Gastrocnemius medialis (tissue), 4 donors: ENCODE measurements at regions of chr19 and their contacts with region 1.

Region 1: GRCh38 chr19:40603389-40604135 is 2.4 kb downstream of the LTBP4 start:
- DNase-seq: peak; percentile 95 to 97
- ATAC-seq: peak; percentile 84 to 85
- H3K4me3 ChIP-seq: peak overlapping the region; percentile 47 to 80 (median 54)
- H3K27ac ChIP-seq: peak overlapping the region; percentile 73 to 84 (median 78)
- H3K4me1 ChIP-seq: peaks cover 31 to 38% of the 10 kb centered on the region in 2 donors
- H3K27me3 ChIP-seq: peaks cover 19 to 30% (median 21%) of the 10 kb centered on the region in 3 donors
- CTCF ChIP-seq: no peak
- POLR2A ChIP-seq: peak; percentile 57 to 81

Region 2: GRCh38 chr19:40444192-40445028 is 159.2 kb before region 1 on chr19 and contains the start of gene SERTAD3:
- in situ Hi-C with region 1: no loop called
- intact Hi-C with region 1: no loop called
- DNase-seq: peak; percentile 95 to 97
- ATAC-seq: peak; percentile 72 to 73
- H3K4me3 ChIP-seq: peak within 1 kb of the TSS; percentile 77 to 98 (median 92)
- H3K27ac ChIP-seq: peak within 1 kb of the TSS; percentile 96 to 99 (median 99)
- H3K4me1 ChIP-seq: peaks cover 15 to 24% of the 10 kb centered on the region in 2 donors
- H3K27me3 ChIP-seq: no peaks in the 10 kb centered on the region
- CTCF ChIP-seq: peak in 2 of 5 experiments; percentile 16 to 22
- POLR2A ChIP-seq: peak; percentile 99
- total RNA-seq, gene SERTAD3: 12.7 to 24.4 (median 18.1) TPM

Region 3: DNA sequence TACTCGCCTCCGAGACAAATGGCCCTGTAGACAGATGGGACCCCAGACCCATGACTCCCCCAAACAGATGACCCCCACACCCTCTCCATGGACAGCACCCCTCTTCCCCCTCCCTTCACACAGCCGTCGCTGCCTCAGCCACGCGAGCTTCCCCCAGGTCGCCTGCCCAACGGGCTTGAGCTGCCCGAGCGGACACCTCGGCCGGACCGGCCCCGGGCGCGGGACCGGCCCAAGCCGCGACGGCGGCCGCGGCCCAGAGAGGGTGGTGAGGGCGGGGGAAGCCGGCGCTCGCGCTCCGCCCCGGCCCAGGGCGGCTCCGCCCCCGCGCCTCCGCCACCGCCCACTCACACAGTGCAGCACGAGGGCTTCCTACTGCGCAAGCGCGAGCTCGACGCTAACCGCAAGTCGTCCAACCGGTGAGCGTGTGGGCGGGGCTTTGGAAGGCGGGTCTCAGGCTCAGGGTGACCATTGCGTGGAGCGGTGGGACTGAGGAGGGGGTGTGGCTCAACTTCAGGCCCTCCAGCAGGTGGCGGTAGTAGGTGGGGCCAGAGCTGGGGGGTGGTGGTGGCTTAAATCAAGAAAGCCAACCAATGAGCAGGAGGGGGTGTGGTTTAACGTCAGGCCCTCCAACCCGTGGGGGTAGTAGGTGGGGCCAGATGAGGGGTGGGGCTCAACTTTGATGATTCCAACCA is 33.1 kb before region 1 on chr19:
- in situ Hi-C with region 1: no loop called
- intact Hi-C with region 1: loop called (anchors 2 kb)
- DNase-seq: peak; percentile 99 to 100
- ATAC-seq: peak; percentile 94 to 96
- H3K4me3 ChIP-seq: peak overlapping the region; percentile 32 to 49 (median 39)
- H3K27ac ChIP-seq: peak overlapping the region; percentile 68 to 78 (median 76)
- H3K4me1 ChIP-seq: peaks cover 6 to 7% of the 10 kb centered on the region in 2 donors
- H3K27me3 ChIP-seq: peaks cover 27 to 28% (median 27%) of the 10 kb centered on the region in 3 donors
- CTCF ChIP-seq: peak in 1 of 5 experiments; percentile 42
- POLR2A ChIP-seq: peak in 1 of 2 donors; percentile 27